Head of caudate nucleus (tissue), 42 donors: ENCODE measurements at regions of chr19 and their contacts with region 1.

Region 1: GRCh38 chr19:7197760-7198696 is 96.2 kb downstream of the INSR start:
- DNase-seq: peak; percentile 71 to 96 (median 90)

Region 2: DNA sequence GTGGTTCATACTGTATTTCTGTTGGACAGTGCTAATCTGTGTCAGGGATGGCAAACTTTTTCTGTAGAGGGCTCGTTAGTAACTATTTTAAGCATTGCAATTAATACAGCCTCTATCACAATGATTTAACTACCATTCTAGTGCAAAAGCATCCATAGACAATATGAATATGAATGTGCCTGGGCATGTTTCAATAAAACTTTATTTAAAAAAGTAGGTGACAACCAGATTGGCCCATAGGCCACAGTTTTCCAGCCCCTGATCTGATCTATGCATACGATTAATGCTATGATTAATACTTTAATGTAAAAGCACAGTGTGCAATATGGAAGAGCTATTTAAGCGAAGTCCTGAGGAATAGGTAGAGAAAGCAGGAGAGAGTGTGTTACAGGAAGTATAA is 281.1 kb before region 1 on chr19:
- intact Hi-C with region 1: no loop called
- DNase-seq: no peak

Region 3: DNA sequence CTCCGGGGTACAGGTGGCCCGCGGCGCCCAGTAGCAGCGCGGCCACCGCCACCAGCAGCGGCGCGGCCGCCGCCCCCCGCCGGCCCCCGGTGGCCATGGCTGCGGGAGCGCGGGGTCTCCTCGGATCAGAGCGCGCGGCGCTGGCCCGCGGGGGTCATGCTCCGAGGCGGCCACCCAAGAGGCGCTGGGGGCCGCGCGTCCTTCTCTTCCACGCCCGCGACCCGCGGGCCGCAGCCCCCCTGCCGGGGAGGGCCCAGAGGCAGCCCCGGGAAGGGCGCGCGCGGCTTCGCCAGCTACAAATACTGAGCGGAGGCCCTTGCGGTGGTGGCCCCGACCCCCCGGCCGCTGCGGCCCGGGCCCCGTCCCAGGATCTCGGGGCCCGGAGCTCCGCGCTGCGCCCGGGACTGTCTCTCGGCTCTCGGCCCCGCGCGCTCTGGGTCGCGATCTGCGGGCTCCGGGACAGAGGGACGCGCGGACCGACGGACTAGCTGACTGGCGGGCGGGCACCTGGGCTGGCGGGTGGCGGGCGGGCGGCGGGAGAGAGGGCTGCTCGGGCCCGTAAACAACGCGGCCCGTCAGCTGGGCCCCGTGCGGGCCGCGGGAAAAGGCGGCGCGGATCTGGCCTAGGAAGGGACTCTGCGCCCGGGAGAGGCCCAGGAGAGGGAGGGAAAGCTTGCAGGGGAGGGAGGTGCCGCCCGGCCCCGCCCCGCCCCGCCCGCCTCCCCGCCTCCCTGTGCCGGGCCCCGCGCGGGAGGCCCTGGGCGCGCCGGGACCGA is 96.0 kb after region 1 on chr19 and contains the start of gene INSR:
- intact Hi-C with region 1: loop called (anchors 1 kb)
- DNase-seq: peak; percentile 69 to 95 (median 90)